Heart right ventricle (tissue), 16 donors: ENCODE measurements at regions of chr5 and their contacts with region 1.

Region 1: DNA sequence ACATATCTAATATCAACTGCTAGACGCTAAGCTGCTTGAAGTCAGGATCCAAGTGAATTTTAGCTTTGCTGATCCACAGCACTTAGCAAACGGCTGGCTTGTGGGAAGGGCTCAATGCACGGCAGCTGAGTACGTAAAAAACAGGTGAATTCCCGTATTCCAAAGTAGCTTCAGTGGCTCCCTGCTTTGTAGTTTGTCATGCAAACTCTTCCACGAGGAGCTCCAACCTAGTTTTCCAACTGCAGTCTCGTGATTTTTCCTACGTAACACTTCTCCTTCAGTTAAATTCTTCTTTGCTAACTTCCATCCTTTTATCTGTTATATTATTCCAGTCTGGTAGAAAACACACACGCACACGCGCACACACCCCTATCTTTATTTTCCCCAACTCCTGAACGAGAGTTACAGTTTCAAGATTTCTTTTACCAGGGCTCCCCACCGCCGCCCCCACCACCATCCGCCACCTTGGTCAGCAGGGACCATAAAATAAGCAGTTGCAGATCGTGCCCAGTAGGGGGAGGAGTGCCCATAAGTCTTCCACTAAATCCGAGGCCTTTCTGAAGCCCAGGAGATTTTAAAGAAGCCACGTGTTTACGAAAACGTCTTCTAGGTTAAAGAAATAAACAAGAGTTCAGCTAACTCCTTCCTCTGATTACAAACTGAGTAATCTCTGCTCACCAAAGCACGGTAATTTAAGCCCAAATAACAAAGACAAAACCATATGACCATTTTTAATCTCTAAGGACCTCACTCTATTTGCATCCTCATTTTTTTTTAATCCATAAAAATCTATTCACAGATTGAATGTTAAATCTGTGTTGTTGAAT is 34.8 kb upstream of the TRIO start:
- DNase-seq: peak; percentile 23 to 65
- ATAC-seq: peak in 7 of 8 donors; percentile 77 to 93 (median 88)
- H3K4me3 ChIP-seq: peak overlapping the region in 7 of 10 donors; percentile 4 to 44 (median 38)
- H3K27ac ChIP-seq: peak overlapping the region in 5 of 10 donors; percentile 6 to 43 (median 8)
- H3K4me1 ChIP-seq: peaks cover 0 to 24% (median 13%) of the 10 kb centered on the region in 9 donors
- H3K27me3 ChIP-seq: no peaks in the 10 kb centered on the region
- CTCF ChIP-seq: peak; percentile 59 to 86 (median 80)

Region 2: DNA sequence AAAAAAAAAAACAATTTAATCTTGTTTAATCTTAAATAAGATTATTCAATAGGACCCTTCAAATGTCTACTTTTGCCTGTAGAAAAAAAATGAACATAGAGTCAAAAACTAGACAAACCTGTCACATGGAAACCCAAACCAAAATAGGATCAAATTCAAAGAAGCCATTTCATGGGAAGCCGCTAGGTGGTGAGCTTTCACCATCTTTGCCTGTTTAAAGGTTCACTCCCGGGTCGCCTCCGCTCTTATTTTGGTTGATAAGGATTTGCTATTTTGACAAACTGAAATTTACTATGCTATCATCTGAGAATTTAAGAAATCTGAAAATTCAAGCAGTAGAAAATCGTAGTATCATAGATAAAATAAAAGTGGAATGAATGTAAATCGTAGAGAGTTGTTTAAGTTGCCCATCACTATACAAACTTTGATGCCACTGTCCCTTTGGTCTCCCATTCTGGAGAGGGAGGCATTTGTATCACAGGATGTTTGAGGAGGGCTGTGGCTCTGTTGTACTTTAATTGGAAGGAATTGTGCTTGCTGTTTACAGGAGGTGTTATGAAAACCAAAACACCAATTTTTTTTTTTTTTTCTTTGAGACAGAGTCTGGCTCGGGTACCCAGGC is 120.4 kb before region 1 on chr5:
- intact Hi-C with region 1: loop called in 7 of 10 experiments (anchors 5 to 10 kb)
- DNase-seq: peak in 1 of 2 donors; percentile 38
- ATAC-seq: peak in 7 of 8 donors; percentile 20 to 79 (median 71)
- H3K4me3 ChIP-seq: no peak overlapping the region
- H3K27ac ChIP-seq: no peak overlapping the region
- H3K4me1 ChIP-seq: peaks cover 0 to 3% (median 0%) of the 10 kb centered on the region in 9 donors
- H3K27me3 ChIP-seq: peaks cover 0 to 13% (median 3%) of the 10 kb centered on the region in 7 donors
- CTCF ChIP-seq: peak; percentile 61 to 92 (median 82)

Region 3: GRCh38 chr5:14008819-14009311 is 99.5 kb before region 1 on chr5:
- intact Hi-C with region 1: loop called in 1 of 10 experiments (anchors 10 kb)
- DNase-seq: no peak
- ATAC-seq: no peak
- H3K4me3 ChIP-seq: no peak overlapping the region
- H3K27ac ChIP-seq: no peak overlapping the region
- H3K4me1 ChIP-seq: peaks cover 0 to 19% (median 10%) of the 10 kb centered on the region in 9 donors
- H3K27me3 ChIP-seq: peaks cover 0 to 30% (median 0%) of the 10 kb centered on the region in 7 donors
- CTCF ChIP-seq: no peak

Region 4: DNA sequence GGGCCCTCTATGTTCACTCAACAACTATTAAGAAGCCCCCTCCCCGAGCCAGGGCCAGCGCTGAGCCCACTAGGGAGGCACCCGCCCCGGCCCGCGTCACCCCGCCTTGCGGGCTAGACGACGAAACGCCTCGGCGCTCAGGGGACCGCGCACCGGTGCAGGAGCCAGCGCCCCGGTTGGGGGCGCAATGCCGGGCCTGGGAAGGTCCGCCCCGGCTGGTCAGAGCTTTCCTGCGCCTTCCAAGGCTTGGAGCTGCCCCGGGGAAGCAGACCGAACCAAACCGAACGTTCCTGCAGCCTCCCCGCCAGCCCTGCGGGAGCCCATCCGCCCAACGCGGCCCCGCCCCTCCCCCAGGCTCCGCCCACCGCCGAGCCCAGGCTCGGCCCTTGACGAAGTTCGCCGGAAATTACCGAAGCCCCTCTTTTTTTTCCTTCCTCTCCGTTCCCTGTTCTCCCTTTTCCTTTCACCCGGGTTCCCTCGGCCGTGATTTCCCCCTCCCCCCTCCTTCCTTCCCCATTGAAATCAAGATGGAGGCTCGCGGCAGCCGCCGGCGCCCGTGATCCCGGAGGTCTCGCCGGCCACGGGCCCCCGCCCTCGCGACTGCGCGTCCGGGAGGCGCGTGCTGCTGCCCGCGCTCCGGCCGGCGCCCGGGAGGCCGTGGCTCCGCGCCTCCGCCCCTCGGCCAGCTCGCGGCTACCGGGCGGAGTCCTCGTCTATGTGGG is 34.6 kb after region 1 on chr5 and contains the start of gene TRIO:
- intact Hi-C with region 1: loop called in 3 of 10 experiments (anchors 2 to 5 kb)
- DNase-seq: peak; percentile 93 to 94
- ATAC-seq: peak; percentile 84 to 92 (median 89)
- H3K4me3 ChIP-seq: peak within 1 kb of the TSS; percentile 76 to 96 (median 92)
- H3K27ac ChIP-seq: peak within 1 kb of the TSS; percentile 89 to 98 (median 94)
- H3K4me1 ChIP-seq: peaks cover 5 to 39% (median 37%) of the 10 kb centered on the region in 9 donors
- H3K27me3 ChIP-seq: no peaks in the 10 kb centered on the region
- CTCF ChIP-seq: peak; percentile 23 to 84 (median 57)
- total RNA-seq, gene TRIO: 47.2 to 71.4 (median 61.9) TPM

Region 5: GRCh38 chr5:14277385-14278320 is 169.3 kb after region 1 on chr5:
- intact Hi-C with region 1: loop called in 3 of 10 experiments (anchors 5 kb)
- DNase-seq: no peak
- ATAC-seq: no peak
- H3K4me3 ChIP-seq: no peak overlapping the region
- H3K27ac ChIP-seq: no peak overlapping the region
- H3K4me1 ChIP-seq: peaks cover 2 to 58% (median 38%) of the 10 kb centered on the region in 9 donors
- H3K27me3 ChIP-seq: no peaks in the 10 kb centered on the region
- CTCF ChIP-seq: no peak

Region 6: GRCh38 chr5:14351845-14352712 is 243.7 kb after region 1 on chr5:
- intact Hi-C with region 1: loop called in 1 of 10 experiments (anchors 5 kb)
- DNase-seq: peak; percentile 59 to 64
- ATAC-seq: peak; percentile 80 to 93 (median 87)
- H3K4me3 ChIP-seq: no peak overlapping the region
- H3K27ac ChIP-seq: no peak overlapping the region
- H3K4me1 ChIP-seq: peaks cover 7 to 45% (median 10%) of the 10 kb centered on the region in 9 donors
- H3K27me3 ChIP-seq: no peaks in the 10 kb centered on the region
- CTCF ChIP-seq: peak; percentile 88 to 98 (median 96)